ENCODE measurements at regions of chr6 and their contacts with region 1.

Region 1: GRCh38 chr6:27838058-27838944 is 73.9 kb downstream of the OR2B2 start:
- DNase-seq: peak; percentile 92
- H3K4me3 Mint-ChIP-seq: no peak overlapping the region
- H3K27ac Mint-ChIP-seq: no peak overlapping the region
- H3K4me1 Mint-ChIP-seq: peaks cover 31% of the 10 kb centered on the region
- H3K27me3 Mint-ChIP-seq: no peaks in the 10 kb centered on the region

Region 2: GRCh38 chr6:27785294-27785693 is 53.0 kb before region 1 on chr6:
- CTCF ChIA-PET with region 1: no interaction called
- POLR2A ChIA-PET with region 1: no interaction called
- DNase-seq: no peak
- H3K4me3 Mint-ChIP-seq: no peak overlapping the region
- H3K27ac Mint-ChIP-seq: no peak overlapping the region
- H3K4me1 Mint-ChIP-seq: peaks cover 3% of the 10 kb centered on the region
- H3K27me3 Mint-ChIP-seq: peaks cover 31% of the 10 kb centered on the region

Region 3: GRCh38 chr6:27825025-27825793 is 13.1 kb before region 1 on chr6:
- CTCF ChIA-PET with region 1: interaction called, 8 read pairs
- POLR2A ChIA-PET with region 1: interaction called, 35 read pairs
- DNase-seq: no peak
- H3K4me3 Mint-ChIP-seq: peak overlapping the region; percentile 89
- H3K27ac Mint-ChIP-seq: peak overlapping the region; percentile 99
- H3K4me1 Mint-ChIP-seq: peaks cover 48% of the 10 kb centered on the region
- H3K27me3 Mint-ChIP-seq: no peaks in the 10 kb centered on the region

Region 4: GRCh38 chr6:27879837-27880236 is 41.5 kb after region 1 on chr6:
- CTCF ChIA-PET with region 1: no interaction called
- POLR2A ChIA-PET with region 1: no interaction called
- DNase-seq: no peak
- H3K4me3 Mint-ChIP-seq: no peak overlapping the region
- H3K27ac Mint-ChIP-seq: peak overlapping the region; percentile 57
- H3K4me1 Mint-ChIP-seq: peaks cover 15% of the 10 kb centered on the region
- H3K27me3 Mint-ChIP-seq: no peaks in the 10 kb centered on the region

Region 5: GRCh38 chr6:29667158-29667557 is 1828.9 kb after region 1 on chr6:
- CTCF ChIA-PET with region 1: no interaction called
- POLR2A ChIA-PET with region 1: no interaction called
- DNase-seq: no peak
- H3K4me3 Mint-ChIP-seq: no peak overlapping the region
- H3K27ac Mint-ChIP-seq: no peak overlapping the region
- H3K4me1 Mint-ChIP-seq: no peaks in the 10 kb centered on the region
- H3K27me3 Mint-ChIP-seq: peaks cover 39% of the 10 kb centered on the region

Measured in activated CD4-positive, alpha-beta T cell treated with anti-CD3 and anti-CD28 coated beads, Interleukin-2, amount 10 ng/mL, durations not matched to agents 7 days and 5 days (primary cell).